ENCODE measurements at regions of chr4 and their contacts with region 1.

Region 1: GRCh38 chr4:42282081-42282901 is 115.0 kb upstream of the SHISA3 start:
- DNase-seq: peak in 1 of 2 experiments; percentile 61
- H3K4me3 ChIP-seq: no peak overlapping the region
- H3K27ac ChIP-seq: no peak overlapping the region
- H3K4me1 ChIP-seq: peaks cover 2 to 4% (median 3%) of the 10 kb centered on the region in 4 experiments; a peak in 5 of 7 replicates
- H3K27me3 ChIP-seq: no peaks in the 10 kb centered on the region
- CTCF ChIP-seq: peak in 2 of 3 experiments; percentile 70 to 85; a peak in 3 of 4 replicates
- EP300 ChIP-seq: no peak
- POLR2A ChIP-seq: no peak
- RAD21 ChIP-seq: peak; percentile 88 to 96

Region 2: GRCh38 chr4:42080306-42080705 is 202.0 kb before region 1 on chr4:
- CTCF ChIA-PET with region 1: no interaction called
- POLR2A ChIA-PET with region 1: no interaction called
- DNase-seq: no peak
- H3K4me3 ChIP-seq: no peak overlapping the region
- H3K27ac ChIP-seq: no peak overlapping the region
- H3K4me1 ChIP-seq: no peaks in the 10 kb centered on the region
- H3K27me3 ChIP-seq: no peaks in the 10 kb centered on the region
- CTCF ChIP-seq: no peak
- EP300 ChIP-seq: no peak
- POLR2A ChIP-seq: no peak
- RAD21 ChIP-seq: no peak

Region 3: DNA sequence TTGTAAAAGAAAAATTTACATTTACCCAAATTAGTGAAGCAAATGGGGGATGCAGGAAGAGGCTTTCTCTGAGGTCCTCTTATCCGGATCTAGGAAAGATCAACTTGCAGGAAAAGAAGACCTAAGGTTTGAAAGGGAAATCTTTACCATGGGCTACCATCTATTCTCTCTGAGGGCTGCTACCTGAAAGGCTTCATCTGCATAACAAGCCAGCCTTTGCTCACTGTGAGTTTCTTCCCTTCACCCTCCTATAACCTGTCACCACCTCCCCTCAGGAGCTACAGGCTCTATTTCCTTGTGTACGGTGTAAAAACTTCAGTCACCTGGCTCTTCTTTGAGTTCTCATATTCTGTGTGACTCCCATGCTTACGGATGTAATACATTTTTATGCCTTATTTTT is 11.2 kb before region 1 on chr4:
- CTCF ChIA-PET with region 1: interaction called, 10 read pairs
- POLR2A ChIA-PET with region 1: no interaction called
- DNase-seq: no peak
- H3K4me3 ChIP-seq: no peak overlapping the region
- H3K27ac ChIP-seq: no peak overlapping the region
- H3K4me1 ChIP-seq: peaks cover 0 to 9% (median 3%) of the 10 kb centered on the region in 4 experiments; a peak in 3 of 7 replicates
- H3K27me3 ChIP-seq: no peaks in the 10 kb centered on the region
- CTCF ChIP-seq: no peak
- EP300 ChIP-seq: no peak
- POLR2A ChIP-seq: no peak
- RAD21 ChIP-seq: no peak

Region 4: DNA sequence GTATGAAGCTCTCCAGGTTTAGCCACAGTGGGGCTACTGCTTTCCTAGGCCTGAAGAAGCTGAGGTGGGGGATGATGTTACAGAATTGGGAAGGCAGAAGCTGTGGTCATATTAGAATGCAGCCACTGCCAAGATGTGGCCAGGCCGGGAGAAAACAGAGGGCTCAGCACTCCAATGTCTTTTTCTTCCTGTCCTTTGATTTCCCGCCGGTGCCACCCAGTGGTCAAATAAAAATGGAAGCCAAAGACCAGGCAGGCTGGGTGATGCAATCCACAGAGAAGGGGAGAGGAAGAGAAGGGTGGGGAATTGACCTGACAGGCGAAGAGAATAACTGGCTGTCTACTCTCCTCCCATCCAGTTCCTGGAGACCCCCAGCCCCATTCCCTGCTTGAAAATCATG is 20.1 kb after region 1 on chr4:
- CTCF ChIA-PET with region 1: interaction called, 48 read pairs
- POLR2A ChIA-PET with region 1: no interaction called
- DNase-seq: no peak
- H3K4me3 ChIP-seq: no peak overlapping the region
- H3K27ac ChIP-seq: no peak overlapping the region
- H3K4me1 ChIP-seq: peaks cover 0 to 7% (median 1%) of the 10 kb centered on the region in 4 experiments; a peak in 2 of 7 replicates
- H3K27me3 ChIP-seq: no peaks in the 10 kb centered on the region
- CTCF ChIP-seq: peak; percentile 32 to 59 (median 47)
- EP300 ChIP-seq: no peak
- POLR2A ChIP-seq: no peak
- RAD21 ChIP-seq: peak; percentile 49 to 69

Region 5: DNA sequence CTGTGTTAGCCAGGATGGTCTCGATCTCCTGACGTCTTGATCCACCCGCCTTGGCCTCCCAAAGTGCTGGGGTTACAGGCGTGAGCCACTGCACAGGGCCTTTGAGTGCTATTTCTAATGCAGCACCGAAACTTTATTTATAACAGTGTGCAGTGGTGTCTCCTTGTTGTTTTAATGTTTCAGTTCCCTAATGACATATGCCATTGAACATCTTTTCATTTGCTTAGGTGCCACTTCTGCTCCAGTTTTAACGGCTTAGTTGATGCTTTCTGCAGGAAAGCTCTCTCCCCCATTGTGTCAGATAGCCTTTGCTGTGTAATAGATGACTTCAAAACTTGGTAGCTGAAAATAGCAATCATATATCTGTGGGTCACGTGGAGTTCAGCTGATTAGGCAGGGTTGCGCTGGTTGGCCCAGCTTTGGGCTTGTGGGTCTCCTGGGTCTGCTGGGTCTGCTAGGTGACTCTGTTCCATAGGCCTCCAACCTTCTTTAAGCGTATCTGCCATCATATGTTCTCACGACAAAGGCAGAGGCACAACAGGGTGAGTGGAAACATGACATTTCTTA is 38.6 kb after region 1 on chr4:
- CTCF ChIA-PET with region 1: interaction called, 11 read pairs
- POLR2A ChIA-PET with region 1: no interaction called
- DNase-seq: no peak
- H3K4me3 ChIP-seq: no peak overlapping the region
- H3K27ac ChIP-seq: no peak overlapping the region
- H3K4me1 ChIP-seq: no peaks in the 10 kb centered on the region; a peak in 1 of 7 replicates
- H3K27me3 ChIP-seq: no peaks in the 10 kb centered on the region
- CTCF ChIP-seq: no peak
- EP300 ChIP-seq: no peak
- POLR2A ChIP-seq: no peak
- RAD21 ChIP-seq: no peak

Region 6: GRCh38 chr4:42371306-42372252 is 89.3 kb after region 1 on chr4:
- CTCF ChIA-PET with region 1: interaction called, 79 read pairs
- POLR2A ChIA-PET with region 1: no interaction called
- DNase-seq: no peak
- H3K4me3 ChIP-seq: no peak overlapping the region
- H3K27ac ChIP-seq: no peak overlapping the region
- H3K4me1 ChIP-seq: no peaks in the 10 kb centered on the region; a peak in 1 of 7 replicates
- H3K27me3 ChIP-seq: 0 out of 7 replicates have a peak, but pooled peaks cover 0 to 2% (median 0%) of the 10 kb centered on the region in 4 experiments
- CTCF ChIP-seq: peak in 2 of 3 experiments; percentile 6 to 40; a peak in 2 of 4 replicates
- EP300 ChIP-seq: no peak
- POLR2A ChIP-seq: no peak
- RAD21 ChIP-seq: peak; percentile 59 to 62

Region 7: DNA sequence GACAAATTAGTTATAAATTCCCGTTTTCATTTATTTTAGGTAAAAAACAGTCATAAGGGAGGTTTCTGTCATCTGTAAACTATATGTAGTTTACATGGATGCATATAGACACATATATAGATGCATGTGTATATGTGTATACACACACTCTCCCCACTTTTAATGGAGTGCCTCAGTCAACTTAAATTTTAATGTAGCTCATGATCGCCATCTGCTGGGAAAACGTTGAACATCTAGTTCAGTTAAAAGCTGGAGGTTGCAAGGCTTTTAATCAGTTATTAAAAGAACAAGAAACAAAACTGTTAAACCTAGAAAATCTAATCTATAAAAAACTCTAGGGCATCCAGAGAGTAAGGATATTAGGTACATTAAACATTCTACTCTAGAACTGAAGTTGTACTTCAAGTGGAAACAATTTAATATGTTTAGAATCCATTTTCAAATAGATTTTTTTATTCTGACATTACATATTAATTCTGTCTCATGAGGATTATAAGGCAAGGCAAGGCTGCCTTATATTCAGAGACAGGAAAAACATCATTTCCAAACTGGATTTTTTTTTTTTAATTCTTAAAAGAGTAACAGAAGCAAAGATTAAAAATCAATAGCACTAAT is 237.6 kb after region 1 on chr4:
- CTCF ChIA-PET with region 1: interaction called, 150 read pairs
- POLR2A ChIA-PET with region 1: no interaction called
- DNase-seq: peak in 1 of 2 experiments; percentile 65
- H3K4me3 ChIP-seq: no peak overlapping the region
- H3K27ac ChIP-seq: no peak overlapping the region
- H3K4me1 ChIP-seq: no peaks in the 10 kb centered on the region
- H3K27me3 ChIP-seq: peaks cover 0 to 4% (median under 1%) of the 10 kb centered on the region in 4 experiments; a peak in 2 of 7 replicates
- CTCF ChIP-seq: peak in 2 of 3 experiments; percentile 55 to 61; a peak in 2 of 4 replicates
- EP300 ChIP-seq: no peak
- POLR2A ChIP-seq: no peak
- RAD21 ChIP-seq: peak; percentile 83 to 86

Region 8: DNA sequence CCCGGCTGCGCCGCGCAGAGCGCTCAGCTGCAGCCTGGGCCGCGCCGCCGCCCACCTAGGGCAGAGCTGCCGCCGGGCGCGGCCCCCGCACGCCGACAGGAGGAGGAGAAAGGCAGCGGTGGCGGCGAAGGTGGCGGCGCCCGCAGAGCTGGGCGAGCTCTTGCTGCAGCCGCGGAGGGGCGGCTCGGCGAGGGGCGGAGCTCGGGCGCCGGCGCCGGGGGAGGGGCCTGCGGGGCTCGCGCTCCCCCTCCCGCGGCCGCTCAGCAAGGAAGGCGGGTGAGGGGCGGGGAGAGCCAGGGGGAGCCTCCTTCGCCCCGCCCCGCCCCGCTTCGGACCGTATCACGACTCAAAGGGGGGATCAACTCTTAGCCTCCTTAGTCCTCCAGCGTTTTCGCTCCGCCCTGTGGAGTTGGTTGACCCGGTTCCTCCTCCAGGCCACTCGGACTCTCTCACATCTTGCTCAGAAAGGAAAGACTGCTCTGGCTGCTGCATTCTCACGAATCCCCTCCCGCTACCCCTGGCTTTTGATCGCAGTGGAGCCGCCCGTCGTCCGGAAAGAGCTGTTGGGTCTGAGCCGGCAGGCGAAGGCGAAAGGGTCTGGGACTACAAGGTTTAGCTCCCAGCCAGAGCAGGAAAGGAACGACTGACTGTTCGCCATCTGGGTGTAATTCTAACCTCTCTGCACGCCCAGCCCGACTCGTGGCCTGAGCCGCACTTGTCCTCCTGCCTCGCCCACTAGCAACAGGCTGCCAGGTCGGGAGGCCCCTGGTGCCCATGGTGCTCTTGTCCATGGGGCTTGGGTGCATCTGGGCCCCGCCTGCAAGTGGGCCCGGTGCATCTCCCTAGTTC is 374.9 kb after region 1 on chr4 and contains the start of gene ATP8A1:
- CTCF ChIA-PET with region 1: no interaction called
- POLR2A ChIA-PET with region 1: no interaction called
- DNase-seq: peak; percentile 70 to 92
- H3K4me3 ChIP-seq: peak within 1 kb of the TSS; percentile 77 to 82 (median 80)
- H3K27ac ChIP-seq: peak within 1 kb of the TSS; percentile 98
- H3K4me1 ChIP-seq: peaks cover 0 to 10% (median 2%) of the 10 kb centered on the region in 4 experiments; a peak in 3 of 7 replicates
- H3K27me3 ChIP-seq: peaks cover 0 to 2% (median 0%) of the 10 kb centered on the region in 4 experiments; a peak in 1 of 7 replicates
- CTCF ChIP-seq: no peak
- EP300 ChIP-seq: peak in 1 of 2 experiments; percentile 98; a peak in 2 of 3 replicates
- POLR2A ChIP-seq: peak; percentile 57 to 92
- RAD21 ChIP-seq: peak in 1 of 2 experiments; percentile 2; a peak in 1 of 4 replicates
- total RNA-seq, gene ATP8A1: 12.2 and 14.9 TPM in 2 replicates